Heart right ventricle (tissue), 16 donors: ENCODE measurements at regions of chr2 and their contacts with region 1.

Region 1: GRCh38 chr2:222690564-222691200 is 19.2 kb downstream of the MOGAT1 start:
- DNase-seq: peak; percentile 67 to 71
- ATAC-seq: peak; percentile 71 to 89 (median 84)
- H3K4me3 ChIP-seq: no peak overlapping the region
- H3K27ac ChIP-seq: no peak overlapping the region
- H3K4me1 ChIP-seq: peaks cover 0 to 13% (median 0%) of the 10 kb centered on the region in 9 donors
- H3K27me3 ChIP-seq: no peaks in the 10 kb centered on the region
- CTCF ChIP-seq: peak; percentile 80 to 99 (median 97)

Region 2: DNA sequence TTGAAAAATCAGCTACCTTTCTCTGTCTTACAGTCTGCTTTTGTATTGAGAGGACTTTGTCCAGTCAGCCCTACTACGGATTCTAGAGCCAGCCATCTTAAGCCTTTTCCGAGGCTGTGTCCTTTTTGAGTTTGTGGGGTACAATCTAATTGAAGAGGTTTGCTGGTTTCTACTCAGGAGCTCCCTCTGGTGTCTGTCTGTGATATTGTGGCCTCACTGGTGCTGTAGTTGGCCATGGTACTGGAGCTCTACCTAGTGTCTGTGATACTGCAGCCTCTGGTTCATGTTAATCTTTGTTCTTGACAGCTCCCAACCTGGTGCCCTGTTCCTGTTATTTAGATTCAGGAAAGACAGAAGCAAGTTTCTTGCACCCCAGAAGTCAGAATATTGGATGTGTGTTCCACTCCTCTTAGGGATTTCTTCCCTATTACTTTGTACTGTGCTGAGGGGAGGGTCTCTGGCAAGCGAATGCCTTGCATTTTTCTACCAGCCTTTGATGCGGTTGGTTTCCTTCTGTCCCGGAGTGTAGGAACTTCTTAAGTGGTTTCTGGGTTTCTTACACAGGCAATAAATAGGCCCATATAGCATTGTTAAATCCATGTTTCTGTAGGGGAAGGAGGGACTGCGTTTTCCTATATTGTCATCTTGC is 248.7 kb after region 1 on chr2:
- intact Hi-C with region 1: loop called in 2 of 10 experiments (anchors 5 kb)
- DNase-seq: peak in 1 of 2 donors; percentile 26
- ATAC-seq: peak in 7 of 8 donors; percentile 38 to 82 (median 70)
- H3K4me3 ChIP-seq: no peak overlapping the region
- H3K27ac ChIP-seq: no peak overlapping the region
- H3K4me1 ChIP-seq: peaks cover 0 to 11% (median 0%) of the 10 kb centered on the region in 9 donors
- H3K27me3 ChIP-seq: no peaks in the 10 kb centered on the region
- CTCF ChIP-seq: peak; percentile 25 to 84 (median 61)